Activated naive CD4-positive, alpha-beta T cell treated with anti-CD3 and anti-CD28 coated beads for 36 hours (primary cell): ENCODE measurements at regions of chr17 and their contacts with region 1.

Region 1: GRCh38 chr17:29699283-29699682 is 76.6 kb upstream of the CORO6 start:
- DNase-seq: no peak
- H3K4me3 Mint-ChIP-seq: no peak overlapping the region
- H3K27ac Mint-ChIP-seq: no peak overlapping the region
- H3K4me1 Mint-ChIP-seq: peaks cover 18% of the 10 kb centered on the region
- H3K27me3 Mint-ChIP-seq: no peaks in the 10 kb centered on the region

Region 2: DNA sequence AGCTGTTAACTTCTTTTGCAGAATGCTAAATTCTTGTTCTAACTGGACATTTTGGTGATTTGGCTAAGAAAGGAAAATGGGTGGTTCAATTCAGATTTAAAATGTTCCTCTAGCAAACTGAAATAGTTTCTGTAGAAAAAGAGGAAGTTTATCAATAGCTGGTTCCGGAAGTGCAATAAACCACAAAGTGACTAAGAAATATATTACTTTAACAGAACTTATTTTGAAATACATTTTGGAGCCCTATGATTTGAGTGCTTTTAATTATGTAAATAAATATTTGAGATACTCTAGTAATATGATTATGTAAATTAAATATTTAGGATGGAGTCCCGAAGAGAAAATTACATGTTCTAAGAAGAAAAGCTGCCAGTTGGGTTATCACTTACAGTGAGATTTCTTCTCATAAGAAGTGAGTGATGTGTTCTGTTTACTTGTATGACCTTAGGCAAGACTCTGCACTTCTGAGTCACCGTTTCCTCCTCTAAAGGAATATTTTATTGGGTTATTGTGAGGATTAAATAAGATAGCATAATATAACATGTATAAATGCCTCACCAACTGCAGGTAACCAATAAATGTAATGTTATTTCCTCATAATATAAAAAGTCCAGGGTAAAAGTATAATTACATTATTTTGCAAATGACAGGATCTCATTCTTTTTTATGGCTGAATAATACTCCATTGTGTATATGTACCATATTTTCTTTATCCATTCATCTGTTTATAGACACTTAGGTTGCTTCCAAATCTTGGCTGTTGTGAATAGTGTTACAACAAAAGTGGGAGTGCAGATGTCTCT is 1614.9 kb after region 1 on chr17 and contains the start of gene EVI2B:
- CTCF ChIA-PET with region 1: no interaction called
- intact Hi-C with region 1: loop called (anchors 10 kb)
- DNase-seq: peak; percentile 18
- H3K4me3 Mint-ChIP-seq: peak within 1 kb of the TSS; percentile 82
- H3K27ac Mint-ChIP-seq: peak within 1 kb of the TSS; percentile 96
- H3K4me1 Mint-ChIP-seq: peaks cover 46% of the 10 kb centered on the region
- H3K27me3 Mint-ChIP-seq: no peaks in the 10 kb centered on the region
- total RNA-seq, gene EVI2B: 9.9 to 11.4 TPM